Activated CD4-positive, alpha-beta T cell treated with anti-CD3 and anti-CD28 coated beads, Interleukin-2, amount 10 ng/mL, durations not matched to agents 24 days and 14 days (primary cell): ENCODE measurements at regions of chr10 and their contacts with region 1.

Region 1: DNA sequence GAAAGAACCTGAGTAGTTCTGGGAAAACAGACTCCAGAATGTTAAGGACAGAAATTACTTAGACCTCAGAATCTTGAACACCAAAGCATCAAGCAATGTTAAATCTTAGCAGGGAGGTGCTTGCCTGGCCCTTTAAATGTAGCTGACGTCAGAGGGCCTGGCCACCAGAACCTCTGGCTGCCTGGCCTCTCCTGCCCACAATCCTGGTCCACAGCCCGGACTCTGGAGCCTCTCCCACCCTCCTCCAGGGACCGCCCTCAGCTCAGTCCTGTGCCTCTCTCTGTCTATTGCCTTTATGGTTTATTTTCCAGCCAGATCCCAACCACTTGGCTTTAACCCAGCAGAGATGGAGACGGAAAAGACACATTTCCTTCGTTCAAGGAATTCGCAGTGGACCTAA is 42.2 kb upstream of the EGR2 start:
- DNase-seq: no peak
- H3K4me3 Mint-ChIP-seq: no peak overlapping the region
- H3K27ac Mint-ChIP-seq: no peak overlapping the region
- H3K4me1 Mint-ChIP-seq: peaks cover 60% of the 10 kb centered on the region
- H3K27me3 Mint-ChIP-seq: peaks cover 4% of the 10 kb centered on the region

Region 2: GRCh38 chr10:62732841-62733653 is 125.3 kb before region 1 on chr10:
- intact Hi-C with region 1: loop called (anchors 1 kb)
- DNase-seq: peak; percentile 91
- H3K4me3 Mint-ChIP-seq: no peak overlapping the region
- H3K27ac Mint-ChIP-seq: no peak overlapping the region
- H3K4me1 Mint-ChIP-seq: peaks cover 43% of the 10 kb centered on the region
- H3K27me3 Mint-ChIP-seq: peaks cover 1% of the 10 kb centered on the region

Region 3: GRCh38 chr10:62779487-62780248 is 78.7 kb before region 1 on chr10:
- intact Hi-C with region 1: loop called (anchors 1 kb)
- DNase-seq: peak; percentile 84
- H3K4me3 Mint-ChIP-seq: peak overlapping the region; percentile 42
- H3K27ac Mint-ChIP-seq: peak overlapping the region; percentile 68
- H3K4me1 Mint-ChIP-seq: peaks cover 31% of the 10 kb centered on the region
- H3K27me3 Mint-ChIP-seq: peaks cover 12% of the 10 kb centered on the region

Region 4: DNA sequence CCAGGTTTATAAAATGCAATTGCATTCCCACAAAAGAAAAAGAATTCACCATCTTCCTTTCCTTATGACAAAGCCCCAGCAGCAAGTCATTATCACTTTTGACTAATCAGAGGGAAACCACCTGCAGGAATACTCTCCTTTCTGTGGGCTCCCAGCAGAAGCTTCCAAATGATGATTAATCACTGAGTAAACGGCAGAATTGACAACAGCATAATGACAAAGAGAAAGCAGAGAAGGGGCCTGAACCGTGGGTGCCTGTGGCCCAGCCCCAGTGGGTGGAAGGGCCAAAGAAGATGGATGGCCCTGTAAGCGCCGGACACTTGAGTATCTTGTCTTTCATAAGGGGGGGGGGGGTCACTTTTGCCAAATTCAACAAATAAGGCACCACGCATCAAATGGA is 122.3 kb after region 1 on chr10:
- intact Hi-C with region 1: loop called (anchors 1 kb)
- DNase-seq: no peak
- H3K4me3 Mint-ChIP-seq: peak overlapping the region; percentile 41
- H3K27ac Mint-ChIP-seq: peak overlapping the region; percentile 94
- H3K4me1 Mint-ChIP-seq: peaks cover 30% of the 10 kb centered on the region
- H3K27me3 Mint-ChIP-seq: peaks cover 2% of the 10 kb centered on the region

Region 5: DNA sequence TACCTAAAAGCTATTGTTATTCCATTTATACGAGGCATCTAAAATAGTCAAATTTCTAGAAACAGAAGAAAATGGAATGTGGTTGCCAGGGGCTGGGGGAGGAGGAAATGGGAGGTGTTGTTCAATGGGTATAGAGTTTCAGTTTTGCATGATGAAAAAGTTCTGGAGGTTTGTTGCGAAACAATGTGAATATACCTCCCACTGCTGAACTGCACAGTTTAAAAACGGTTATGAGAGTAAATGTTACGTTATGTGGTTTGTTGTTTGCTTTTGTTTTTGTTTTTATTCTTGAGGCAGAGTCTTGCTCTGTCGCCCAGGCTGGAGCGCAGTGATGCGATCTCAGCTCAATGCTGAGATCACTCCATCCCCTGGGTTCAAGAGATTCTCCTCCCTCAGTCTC is 209.9 kb after region 1 on chr10:
- intact Hi-C with region 1: loop called (anchors 1 kb)
- DNase-seq: peak; percentile 70
- H3K4me3 Mint-ChIP-seq: peak overlapping the region; percentile 49
- H3K27ac Mint-ChIP-seq: peak overlapping the region; percentile 34
- H3K4me1 Mint-ChIP-seq: peaks cover 38% of the 10 kb centered on the region
- H3K27me3 Mint-ChIP-seq: peaks cover 15% of the 10 kb centered on the region